Dorsolateral prefrontal cortex (tissue), 120 donors: ENCODE measurements at regions of chr4 and their contacts with region 1.

Region 1: GRCh38 chr4:165207431-165208220 is at the start of gene KLHL2:
- DNase-seq: peak; percentile 24 to 89 (median 72)
- H3K4me3 ChIP-seq: peak within 1 kb of the TSS; percentile 59 to 98 (median 88)
- H3K27ac ChIP-seq: peak within 1 kb of the TSS; percentile 70 to 97 (median 92)
- H3K27me3 ChIP-seq: no peaks in the 10 kb centered on the region
- CTCF ChIP-seq: peak in 5 of 56 donors; percentile 6 to 28 (median 10)
- total RNA-seq, gene KLHL2: 46.9 to 127 (median 90.7) TPM

Region 2: GRCh38 chr4:164621886-164622521 is 585.6 kb before region 1 on chr4:
- intact Hi-C with region 1: no loop called
- DNase-seq: no peak
- H3K4me3 ChIP-seq: no peak overlapping the region
- H3K27ac ChIP-seq: no peak overlapping the region
- H3K27me3 ChIP-seq: no peaks in the 10 kb centered on the region
- CTCF ChIP-seq: no peak

Region 3: GRCh38 chr4:165112368-165113139 is 95.1 kb before region 1 on chr4 and contains the start of gene TMEM192:
- intact Hi-C with region 1: loop called in 1 of 2 experiments (anchors 1 kb)
- DNase-seq: peak; percentile 89 to 98 (median 96)
- H3K4me3 ChIP-seq: peak within 1 kb of the TSS; percentile 67 to 100 (median 93)
- H3K27ac ChIP-seq: peak within 1 kb of the TSS; percentile 62 to 98 (median 93)
- H3K27me3 ChIP-seq: no peaks in the 10 kb centered on the region
- CTCF ChIP-seq: peak in 36 of 56 donors; percentile 8 to 66 (median 37)
- total RNA-seq, gene TMEM192: 12.0 to 35.8 (median 23.8) TPM

Region 4: GRCh38 chr4:165136529-165136928 is 71.1 kb before region 1 on chr4:
- intact Hi-C with region 1: loop called (anchors 5 kb)
- DNase-seq: no peak
- H3K4me3 ChIP-seq: no peak overlapping the region
- H3K27ac ChIP-seq: no peak overlapping the region
- H3K27me3 ChIP-seq: no peaks in the 10 kb centered on the region
- CTCF ChIP-seq: no peak

Region 5: GRCh38 chr4:165177725-165178666 is 29.6 kb before region 1 on chr4:
- intact Hi-C with region 1: no loop called
- DNase-seq: no peak
- H3K4me3 ChIP-seq: no peak overlapping the region
- H3K27ac ChIP-seq: no peak overlapping the region
- H3K27me3 ChIP-seq: no peaks in the 10 kb centered on the region
- CTCF ChIP-seq: no peak

Region 6: DNA sequence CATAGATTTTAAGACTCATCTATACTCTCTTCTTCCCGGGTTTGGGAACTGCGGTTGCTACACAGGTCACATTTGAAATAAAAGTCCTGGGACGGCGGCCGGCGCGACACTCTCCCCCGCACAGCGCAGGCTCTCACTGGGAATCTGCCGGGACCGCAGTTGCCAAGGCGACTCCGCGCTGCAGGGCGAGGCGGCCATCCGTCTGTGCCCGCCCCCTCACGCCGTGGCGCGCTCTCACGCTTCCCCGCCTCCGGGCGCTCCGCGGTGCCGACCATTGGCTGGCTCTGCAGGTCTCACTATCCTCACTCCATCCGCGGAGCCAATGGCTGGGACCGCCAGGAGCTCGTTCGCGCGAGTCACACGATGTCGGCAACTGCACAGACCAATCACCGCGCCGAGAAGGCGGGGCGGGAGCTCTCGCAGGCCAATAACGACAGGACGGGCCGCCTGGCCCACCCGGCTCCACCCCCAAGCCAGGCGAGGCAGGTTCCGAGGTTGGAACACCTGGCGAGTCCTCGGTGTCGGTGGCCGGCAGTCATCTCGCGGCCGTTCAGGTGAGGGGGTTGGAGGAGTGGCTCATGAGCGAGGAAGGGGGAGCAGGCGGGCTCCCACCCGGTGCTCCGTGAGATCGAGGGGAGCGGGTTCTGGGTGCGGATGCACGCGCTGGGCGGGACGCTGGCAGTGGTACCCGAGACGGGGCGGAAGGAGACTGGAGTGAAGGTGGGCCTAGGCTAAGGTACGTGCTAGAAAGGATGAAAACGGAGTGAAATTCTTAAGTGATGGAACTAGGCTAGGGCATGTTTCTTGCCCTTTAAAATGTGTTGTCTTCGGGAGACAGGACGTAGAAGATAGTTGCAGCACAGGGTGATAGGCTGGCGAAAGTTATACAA is 119.8 kb after region 1 on chr4 and contains the start of gene MSMO1:
- intact Hi-C with region 1: loop called (anchors 2 kb)
- DNase-seq: peak; percentile 99 to 100 (median 99)
- H3K4me3 ChIP-seq: peak within 1 kb of the TSS; percentile 64 to 99 (median 92)
- H3K27ac ChIP-seq: peak within 1 kb of the TSS; percentile 79 to 99 (median 95)
- H3K27me3 ChIP-seq: no peaks in the 10 kb centered on the region
- CTCF ChIP-seq: peak in 14 of 56 donors; percentile 5 to 38 (median 17)
- total RNA-seq, gene MSMO1: 33.4 to 188 (median 66.6) TPM

Region 7: DNA sequence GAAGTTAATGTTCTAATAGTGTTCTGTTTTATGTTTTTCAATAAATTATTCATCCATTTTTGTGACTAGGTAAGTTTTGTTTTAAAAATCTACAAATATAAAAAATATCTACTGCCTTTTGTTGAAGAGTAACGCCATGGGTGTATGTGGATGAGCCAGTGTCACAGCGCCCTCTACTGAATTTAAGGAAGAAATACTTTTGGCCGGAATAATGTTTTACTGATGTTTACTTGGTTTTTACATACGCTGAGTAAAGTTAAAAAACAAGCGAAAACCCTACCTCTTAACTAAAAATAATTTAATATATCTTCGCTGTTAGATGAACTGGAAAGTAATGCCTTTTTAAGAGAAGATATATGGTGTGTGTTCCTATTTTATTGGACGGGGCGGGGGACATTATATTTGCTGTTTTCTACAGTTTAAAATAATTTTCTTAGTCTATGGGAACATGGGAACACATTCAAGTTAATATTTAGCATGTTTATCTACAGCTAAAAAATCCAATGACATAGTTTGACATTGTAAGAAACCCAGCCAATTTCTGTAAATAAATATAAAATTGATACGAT is 257.3 kb after region 1 on chr4:
- intact Hi-C with region 1: loop called in 1 of 2 experiments (anchors 5 kb)
- DNase-seq: no peak
- H3K4me3 ChIP-seq: peak overlapping the region in 2 of 59 donors; percentile 0 to 4
- H3K27ac ChIP-seq: peak overlapping the region in 16 of 59 donors; percentile 0 to 75 (median 55)
- H3K27me3 ChIP-seq: no peaks in the 10 kb centered on the region
- CTCF ChIP-seq: peak; percentile 67 to 96 (median 85)

Region 8: GRCh38 chr4:166239354-166239753 is 1031.7 kb after region 1 on chr4:
- intact Hi-C with region 1: no loop called
- DNase-seq: no peak
- H3K4me3 ChIP-seq: no peak overlapping the region
- H3K27ac ChIP-seq: no peak overlapping the region
- H3K27me3 ChIP-seq: no peaks in the 10 kb centered on the region
- CTCF ChIP-seq: no peak